PC-9 (cell line): ENCODE measurements at regions of chr7 and their contacts with region 1.

Region 1: GRCh38 chr7:148121426-148121825 is 469.1 kb upstream of the C7orf33 start:
- DNase-seq: no peak
- H3K4me3 ChIP-seq: no peak overlapping the region
- H3K27ac ChIP-seq: no peak overlapping the region
- H3K4me1 ChIP-seq: no peaks in the 10 kb centered on the region
- H3K27me3 ChIP-seq: peaks cover 6% of the 10 kb centered on the region; the same call in 1 of the 2 replicates
- CTCF ChIP-seq: no peak

Region 2: GRCh38 chr7:148095066-148095465 is 26.4 kb before region 1 on chr7:
- CTCF ChIA-PET with region 1: no interaction called
- POLR2A ChIA-PET with region 1: no interaction called
- intact Hi-C with region 1: no loop called
- DNase-seq: no peak
- H3K4me3 ChIP-seq: no peak overlapping the region
- H3K27ac ChIP-seq: no peak overlapping the region
- H3K4me1 ChIP-seq: no peaks in the 10 kb centered on the region
- H3K27me3 ChIP-seq: 0 out of 2 replicates have a peak, but pooled peaks cover under 1% of the 10 kb centered on the region
- CTCF ChIP-seq: no peak

Region 3: DNA sequence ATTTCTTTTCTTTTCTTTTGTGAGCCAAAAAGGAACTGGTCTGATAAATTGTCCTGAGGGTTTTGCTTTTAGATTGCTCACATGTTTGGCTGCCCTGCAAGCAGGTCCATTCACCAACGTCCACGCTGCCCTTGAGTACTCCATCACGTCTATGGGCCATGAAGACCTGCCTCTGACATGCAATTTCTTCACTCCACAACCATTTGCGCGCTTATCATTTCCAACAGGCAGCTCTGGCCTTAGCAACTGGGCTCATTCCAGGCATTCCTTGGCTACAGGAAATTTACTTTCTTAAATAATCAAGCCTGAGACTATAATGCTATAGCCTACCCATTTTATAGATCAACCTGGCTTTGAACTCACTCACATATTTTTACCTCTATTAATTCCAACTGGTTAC is 60.8 kb after region 1 on chr7:
- CTCF ChIA-PET with region 1: interaction called, 21 read pairs
- POLR2A ChIA-PET with region 1: no interaction called
- intact Hi-C with region 1: no loop called
- DNase-seq: no peak
- H3K4me3 ChIP-seq: no peak overlapping the region
- H3K27ac ChIP-seq: no peak overlapping the region
- H3K4me1 ChIP-seq: no peaks in the 10 kb centered on the region
- H3K27me3 ChIP-seq: 0 out of 2 replicates have a peak, but pooled peaks cover 5% of the 10 kb centered on the region
- CTCF ChIP-seq: no peak